Aorta (tissue), 5 donors: ENCODE measurements at regions of chr11 and their contacts with region 1.

Region 1: DNA sequence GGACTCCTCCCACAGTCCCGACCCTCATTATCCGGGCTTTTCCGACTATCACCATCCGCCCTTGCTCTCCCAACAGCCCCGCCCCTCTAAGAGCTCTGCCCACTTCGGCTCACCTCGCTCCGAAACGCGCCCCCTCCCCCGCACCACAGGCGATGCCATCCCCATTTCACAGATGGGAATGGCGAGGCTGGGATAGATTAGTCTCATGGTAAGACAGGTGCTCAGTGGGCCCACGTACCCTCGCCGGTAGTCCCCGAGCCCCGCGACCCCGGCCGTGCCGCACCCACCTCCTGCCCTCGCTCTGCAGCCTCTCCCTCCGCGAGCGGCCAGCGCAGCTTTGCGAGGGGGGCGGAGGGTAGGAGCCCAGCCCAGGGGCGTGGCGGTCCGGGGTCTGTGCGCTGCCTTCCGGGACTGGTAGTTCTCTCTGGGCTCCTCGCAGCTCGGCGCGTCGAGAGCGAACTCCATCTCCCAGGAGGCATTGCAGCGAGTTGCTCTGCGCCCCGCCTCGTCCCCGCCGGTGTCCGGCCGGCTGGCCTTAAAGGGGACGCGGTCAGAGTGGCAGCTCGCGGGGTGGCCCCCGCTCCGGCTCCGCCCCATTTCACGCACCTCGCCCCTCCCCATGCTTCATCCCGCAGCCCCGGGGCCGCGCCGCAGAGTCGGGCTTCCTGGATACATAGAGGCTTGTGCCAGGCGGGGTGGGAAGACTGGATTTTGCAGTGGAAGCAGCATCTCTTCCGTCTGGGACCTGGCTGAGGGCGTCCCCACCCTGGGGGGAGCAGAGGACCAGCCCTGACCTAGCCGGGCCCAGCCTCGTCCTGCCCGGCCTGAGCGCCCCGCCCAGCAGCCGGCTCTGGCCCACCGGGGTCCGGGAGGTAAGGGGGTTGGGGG is at the starts of genes KCTD21 and USP35:
- DNase-seq: peak; percentile 99
- ATAC-seq: peak; percentile 97
- H3K4me3 ChIP-seq: peak within 1 kb of the TSS; percentile 73 to 77
- H3K27ac ChIP-seq: peak within 1 kb of the TSS in 1 of 2 donors; percentile 58
- H3K4me1 ChIP-seq: peaks cover 0 to 5% of the 10 kb centered on the region in 2 donors
- H3K27me3 ChIP-seq: no peaks in the 10 kb centered on the region
- total RNA-seq, gene KCTD21: 14.0 to 16.1 TPM
- total RNA-seq, gene USP35: 26.8 to 28.0 TPM

Region 2: DNA sequence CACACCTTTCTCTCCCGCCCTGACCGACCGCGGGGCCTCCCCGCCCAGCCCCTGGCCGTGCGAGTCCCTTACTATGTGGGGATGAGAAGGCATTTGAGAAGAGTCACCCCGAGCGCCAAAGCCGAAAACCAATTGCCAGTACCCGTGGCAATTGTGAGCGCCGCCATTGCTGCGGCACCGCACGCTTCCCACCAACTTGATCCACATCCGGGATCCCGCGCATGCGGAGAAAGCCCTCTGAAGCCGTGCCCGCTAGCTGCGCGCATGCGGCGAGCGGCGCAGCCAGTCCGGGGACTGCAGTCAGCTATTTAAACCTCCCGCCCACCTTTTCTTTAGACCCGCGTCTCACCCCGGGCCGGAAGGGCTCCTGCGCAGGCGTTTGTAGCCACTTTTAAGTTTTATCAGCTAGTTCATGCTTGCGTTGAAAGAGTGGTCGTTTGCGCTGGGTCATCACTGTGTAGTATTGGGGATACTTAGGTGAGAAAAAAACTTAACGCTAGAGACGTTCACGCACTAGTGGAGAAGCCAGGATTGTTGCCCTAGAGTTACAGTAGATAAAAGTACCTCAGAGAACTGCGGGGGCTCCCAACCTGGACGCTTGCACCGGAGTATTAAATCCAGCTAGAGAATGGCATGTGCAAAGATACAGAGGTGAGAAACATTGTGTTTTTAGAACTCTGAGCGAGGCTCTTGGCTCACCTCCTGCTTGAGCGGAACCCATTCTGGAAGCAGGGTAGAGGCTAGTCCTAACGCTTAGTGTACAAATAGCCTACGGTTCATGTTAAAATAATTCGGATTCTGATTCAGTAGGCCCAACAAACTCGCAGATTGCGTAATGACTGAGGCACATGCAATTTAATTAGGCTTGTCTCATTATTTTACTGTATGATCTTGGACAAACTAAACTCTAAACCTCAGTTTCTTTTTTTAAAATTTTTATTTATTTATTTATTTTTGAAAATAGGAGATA is 48.8 kb before region 1 on chr11 and contains the start of gene ALG8:
- intact Hi-C with region 1: loop called in 1 of 2 experiments (anchors 2 kb)
- DNase-seq: peak; percentile 97 to 99
- ATAC-seq: peak; percentile 98
- H3K4me3 ChIP-seq: peak within 1 kb of the TSS; percentile 69 to 81
- H3K27ac ChIP-seq: peak within 1 kb of the TSS in 1 of 2 donors; percentile 9
- H3K4me1 ChIP-seq: no peaks in the 10 kb centered on the region
- H3K27me3 ChIP-seq: no peaks in the 10 kb centered on the region
- total RNA-seq, gene ALG8: 22.2 to 23.6 TPM

Region 3: GRCh38 chr11:78149646-78150045 is 38.9 kb before region 1 on chr11:
- intact Hi-C with region 1: loop called (anchors 5 kb)
- DNase-seq: peak in 1 of 2 donors; percentile 74
- ATAC-seq: peak; percentile 81
- H3K4me3 ChIP-seq: no peak overlapping the region
- H3K27ac ChIP-seq: no peak overlapping the region
- H3K4me1 ChIP-seq: no peaks in the 10 kb centered on the region
- H3K27me3 ChIP-seq: no peaks in the 10 kb centered on the region

Region 4: DNA sequence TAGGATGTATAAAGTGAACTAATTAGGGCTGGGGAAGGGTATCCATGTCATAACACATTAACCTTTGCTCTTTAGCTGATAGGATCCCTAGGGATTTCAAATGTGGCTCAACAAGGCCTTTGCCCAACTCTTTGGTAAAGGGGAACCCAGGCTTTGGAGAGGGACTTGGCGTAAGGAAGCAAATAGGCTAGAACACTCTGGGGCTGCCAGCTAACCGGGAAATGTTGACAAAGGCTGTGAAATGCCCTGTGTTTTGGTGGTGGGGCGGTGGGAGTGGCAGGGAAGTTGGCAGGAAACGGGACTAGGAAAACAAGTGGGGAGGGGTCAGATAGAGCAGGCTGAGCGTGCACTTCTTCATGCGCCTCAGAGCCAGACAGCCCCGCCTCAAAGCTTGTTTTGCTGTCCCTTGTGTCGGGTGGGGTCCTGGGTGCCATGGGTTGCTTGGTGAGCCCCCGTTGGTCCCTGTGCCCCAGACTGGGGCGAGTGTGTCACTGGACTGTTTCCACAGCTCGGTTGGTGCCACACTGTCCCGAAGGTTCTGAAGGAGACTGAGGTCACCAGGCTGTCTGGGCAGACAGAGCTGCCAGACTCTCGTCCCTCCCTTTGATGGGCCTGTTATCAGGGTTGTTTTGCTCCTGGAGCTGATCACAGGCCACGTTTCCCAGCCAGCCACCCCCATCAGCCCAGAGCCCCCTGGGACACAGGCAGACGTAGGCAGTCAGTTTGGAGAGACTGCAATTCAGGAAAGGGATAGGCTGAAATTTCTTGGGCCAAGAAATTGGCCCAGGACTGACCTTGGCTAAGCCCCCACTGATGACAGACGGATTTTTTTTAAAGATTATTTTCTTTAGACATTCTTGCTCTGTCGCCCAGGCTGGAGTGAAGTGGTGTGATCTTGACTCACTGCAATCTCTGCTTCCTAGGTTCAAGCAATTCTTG is 19.7 kb before region 1 on chr11:
- intact Hi-C with region 1: loop called (anchors 1 to 2 kb)
- DNase-seq: peak; percentile 96
- ATAC-seq: peak; percentile 93
- H3K4me3 ChIP-seq: no peak overlapping the region
- H3K27ac ChIP-seq: peak overlapping the region; percentile 89 to 99
- H3K4me1 ChIP-seq: peaks cover under 1 to 10% of the 10 kb centered on the region in 2 donors
- H3K27me3 ChIP-seq: no peaks in the 10 kb centered on the region

Region 5: DNA sequence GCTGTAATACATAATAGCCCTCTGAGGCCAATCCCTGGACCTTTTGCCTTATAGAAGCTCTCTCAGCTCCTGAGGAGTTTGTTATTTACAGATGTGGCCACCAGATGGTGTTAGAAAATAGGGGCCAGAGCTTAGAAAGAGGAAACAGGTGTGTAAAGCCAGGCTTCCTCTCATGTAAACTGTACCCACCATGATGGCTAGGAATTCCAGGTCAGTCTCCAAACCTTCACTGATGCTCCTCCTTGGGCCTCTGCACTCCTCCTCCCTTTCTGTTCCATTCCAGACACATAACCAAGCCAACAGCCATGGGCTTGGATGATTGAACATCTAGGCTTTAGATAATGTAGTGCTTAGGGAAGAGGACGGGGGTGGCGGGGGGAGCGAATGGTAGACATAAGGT is 39.9 kb after region 1 on chr11:
- intact Hi-C with region 1: no loop called
- DNase-seq: no peak
- ATAC-seq: peak; percentile 54
- H3K4me3 ChIP-seq: no peak overlapping the region
- H3K27ac ChIP-seq: no peak overlapping the region
- H3K4me1 ChIP-seq: peaks cover 3 to 6% of the 10 kb centered on the region in 2 donors
- H3K27me3 ChIP-seq: no peaks in the 10 kb centered on the region

Region 6: GRCh38 chr11:78350646-78351165 is 162.2 kb after region 1 on chr11:
- intact Hi-C with region 1: no loop called
- DNase-seq: no peak
- ATAC-seq: peak; percentile 69
- H3K4me3 ChIP-seq: peak overlapping the region in 1 of 2 donors; percentile 30
- H3K27ac ChIP-seq: peak overlapping the region in 1 of 2 donors; percentile 38
- H3K4me1 ChIP-seq: peaks cover 5 to 14% of the 10 kb centered on the region in 2 donors
- H3K27me3 ChIP-seq: no peaks in the 10 kb centered on the region